GM10248 (cell line): ENCODE measurements at regions of chr14 and their contacts with region 1.

Region 1: GRCh38 chr14:76250302-76250701 is 98.6 kb downstream of the GPATCH2L start:
- DNase-seq: no peak
- CTCF ChIP-seq: no peak

Region 2: DNA sequence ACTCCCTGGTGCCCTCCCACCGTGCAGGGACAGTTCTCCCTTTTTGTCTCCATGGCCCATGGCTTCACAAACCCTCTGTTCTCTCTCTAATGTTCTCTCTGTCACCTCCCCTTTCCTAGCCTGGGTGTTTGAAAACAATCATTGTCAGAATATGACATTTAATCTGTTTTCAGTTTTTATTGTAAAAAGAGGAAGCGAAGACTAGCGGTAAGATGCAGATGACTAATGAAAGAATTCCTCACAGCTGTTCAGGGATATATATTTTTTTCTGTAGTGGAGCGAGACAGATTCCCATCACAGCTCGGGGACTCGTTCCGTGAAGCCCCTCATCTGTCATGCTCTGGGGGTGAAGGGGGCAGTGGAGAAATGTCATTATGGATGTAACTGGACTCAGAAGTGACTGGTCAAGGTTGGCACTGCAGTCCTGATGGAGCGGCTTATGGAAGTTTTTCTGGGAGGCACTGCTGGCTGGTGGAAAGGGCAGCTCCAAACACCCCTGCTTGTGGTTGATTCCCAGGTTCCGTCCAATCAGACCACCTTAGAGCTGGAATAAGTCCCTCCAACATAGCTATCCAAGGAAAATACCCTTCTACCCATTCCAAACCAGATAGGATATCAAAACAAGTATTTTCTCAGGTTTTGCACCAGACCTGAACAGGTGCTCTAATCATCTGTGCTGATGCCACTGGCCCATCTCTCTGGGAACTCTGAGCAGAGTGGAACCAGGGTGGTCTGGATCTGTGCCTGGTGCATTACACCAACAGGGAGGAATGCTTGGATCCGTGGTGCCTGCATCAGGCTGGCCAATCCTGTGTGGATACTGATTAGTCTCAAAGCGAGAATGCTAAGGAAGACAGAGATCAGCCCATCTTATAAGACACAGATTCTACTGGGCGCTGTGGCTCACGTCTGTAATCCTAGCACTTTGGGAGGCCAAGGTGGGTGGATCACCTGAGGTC is 13.9 kb before region 1 on chr14:
- CTCF ChIA-PET with region 1: interaction called, 11 read pairs
- POLR2A ChIA-PET with region 1: no interaction called
- DNase-seq: peak; percentile 66
- CTCF ChIP-seq: no peak

Region 3: DNA sequence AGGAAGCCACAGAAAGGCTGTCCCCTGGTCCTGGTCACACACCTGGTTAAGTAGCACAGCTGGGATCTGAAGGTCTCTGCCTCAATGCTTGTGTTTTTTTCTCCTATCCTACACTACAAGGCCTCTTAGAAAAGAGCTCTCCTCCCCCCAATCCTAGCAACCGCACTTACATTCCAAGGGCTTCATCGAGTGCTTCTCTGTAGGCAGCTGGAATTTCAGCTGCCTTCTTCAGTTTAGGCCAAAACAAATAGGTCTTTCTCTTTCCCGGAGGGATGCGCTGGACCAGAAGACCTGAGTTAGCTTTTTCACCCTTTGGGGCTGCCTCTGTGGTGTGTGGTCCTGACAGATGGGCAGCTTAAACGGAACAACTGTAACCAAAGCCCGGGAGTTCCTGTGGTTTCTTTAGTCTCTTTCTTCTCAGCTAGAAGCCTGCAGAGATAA is 11.1 kb after region 1 on chr14:
- CTCF ChIA-PET with region 1: interaction called, 18 read pairs
- POLR2A ChIA-PET with region 1: no interaction called
- DNase-seq: no peak
- CTCF ChIP-seq: no peak